Head of caudate nucleus (tissue), 42 donors: ENCODE measurements at regions of chr1 and their contacts with region 1.

Region 1: DNA sequence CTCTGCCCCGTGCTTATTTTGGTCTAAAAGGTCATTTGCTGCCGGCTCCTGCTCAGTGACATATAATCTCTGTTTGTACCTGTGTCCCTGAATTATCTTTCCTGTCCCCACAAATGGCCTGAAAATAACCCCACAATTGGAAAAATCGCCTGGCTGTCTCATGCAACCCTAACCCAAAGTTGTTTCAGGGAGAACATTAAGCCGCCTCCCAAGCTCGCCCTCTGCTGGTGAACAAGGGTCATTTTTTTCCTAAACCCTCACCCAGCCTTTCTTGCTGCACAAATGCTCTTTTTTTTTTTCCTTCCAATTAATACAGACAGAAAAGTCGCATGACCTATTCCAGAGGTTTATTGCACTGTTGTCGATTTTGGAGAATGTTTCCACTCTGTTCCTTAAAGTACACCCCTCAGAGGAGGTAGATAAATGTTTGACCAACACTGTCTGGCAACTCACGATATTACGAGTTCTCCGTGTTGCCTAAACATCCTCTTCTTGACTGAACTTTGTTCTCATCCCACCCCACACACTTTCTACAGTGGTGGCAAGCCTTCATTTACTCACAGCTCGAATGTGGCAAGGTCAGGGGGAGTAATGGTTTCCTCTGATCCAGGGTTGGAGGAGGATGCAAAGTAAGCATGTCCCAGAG is 148.7 kb downstream of the ZZZ3 start:
- DNase-seq: peak; percentile 39 to 91 (median 76)

Region 2: DNA sequence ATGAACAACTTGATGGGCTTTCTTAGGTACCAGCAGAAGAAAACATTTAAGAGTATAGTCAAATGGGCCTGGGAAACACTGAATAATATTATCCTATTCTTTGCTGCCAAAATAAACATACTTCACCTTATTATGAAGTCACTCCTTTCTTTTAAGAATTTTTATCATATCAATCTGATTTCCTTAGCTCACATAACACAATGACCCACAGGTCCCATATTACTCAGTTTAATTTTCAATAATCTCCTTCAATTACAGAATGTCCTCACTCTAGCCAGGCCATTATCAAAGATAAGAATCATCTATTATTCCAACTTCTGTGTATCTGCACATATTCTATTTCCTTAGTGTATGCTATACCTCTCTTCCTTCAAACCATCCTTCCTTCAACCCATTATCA is 377.6 kb before region 1 on chr1:
- intact Hi-C with region 1: loop called (anchors 10 kb)
- DNase-seq: no peak

Region 3: GRCh38 chr1:77219166-77219887 is 314.5 kb before region 1 on chr1 and contains the start of gene PIGK:
- intact Hi-C with region 1: loop called (anchors 10 kb)
- DNase-seq: peak; percentile 74 to 94 (median 88)

Region 4: GRCh38 chr1:77281491-77282186 is 252.1 kb before region 1 on chr1 and contains the start of gene AK5:
- intact Hi-C with region 1: loop called (anchors 5 kb)
- DNase-seq: peak; percentile 6 to 86 (median 74)

Region 5: GRCh38 chr1:78095593-78095992 is 561.8 kb after region 1 on chr1:
- intact Hi-C with region 1: no loop called
- DNase-seq: peak in 7 of 42 donors; percentile 3 to 40 (median 20)